ENCODE measurements at regions of chr17 and their contacts with region 1.

Region 1: GRCh38 chr17:66549731-66550207 is 247.4 kb downstream of the PRKCA start:
- DNase-seq: no peak
- H3K4me3 Mint-ChIP-seq: no peak overlapping the region
- H3K27ac Mint-ChIP-seq: no peak overlapping the region
- H3K4me1 Mint-ChIP-seq: peaks cover 42% of the 10 kb centered on the region
- H3K27me3 Mint-ChIP-seq: no peaks in the 10 kb centered on the region

Region 2: GRCh38 chr17:66191593-66192382 is 358.0 kb before region 1 on chr17 and contains the start of gene CEP112:
- intact Hi-C with region 1: loop called (anchors 5 kb)
- DNase-seq: peak; percentile 81
- H3K4me3 Mint-ChIP-seq: peak within 1 kb of the TSS; percentile 80
- H3K27ac Mint-ChIP-seq: peak within 1 kb of the TSS; percentile 70
- H3K4me1 Mint-ChIP-seq: peaks cover 15% of the 10 kb centered on the region
- H3K27me3 Mint-ChIP-seq: peaks cover 6% of the 10 kb centered on the region
- total RNA-seq, gene CEP112: 1.3 and 1.7 TPM in 2 replicates

Region 3: DNA sequence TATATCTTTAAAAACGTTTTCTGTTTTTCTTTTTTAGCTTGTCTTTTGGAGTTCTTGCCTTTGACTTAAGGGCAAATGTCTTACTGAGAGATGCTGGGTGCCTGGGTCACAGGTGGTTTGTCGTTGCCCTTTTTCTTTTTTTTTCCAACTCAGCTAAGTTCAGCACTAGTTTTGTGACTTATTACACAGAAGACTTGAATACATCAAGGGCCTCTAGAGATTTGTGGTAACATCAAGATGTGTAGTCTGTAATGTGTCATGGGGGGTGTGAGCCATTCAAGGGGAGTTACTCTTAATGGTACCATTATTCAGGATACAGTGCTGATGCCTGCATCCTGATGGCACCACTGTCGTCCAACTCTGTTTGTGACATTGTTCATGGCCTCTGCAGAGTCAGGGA is 152.3 kb before region 1 on chr17:
- intact Hi-C with region 1: loop called (anchors 1 kb)
- DNase-seq: no peak
- H3K4me3 Mint-ChIP-seq: no peak overlapping the region
- H3K27ac Mint-ChIP-seq: peak overlapping the region; percentile 69
- H3K4me1 Mint-ChIP-seq: peaks cover 80% of the 10 kb centered on the region
- H3K27me3 Mint-ChIP-seq: no peaks in the 10 kb centered on the region

Region 4: DNA sequence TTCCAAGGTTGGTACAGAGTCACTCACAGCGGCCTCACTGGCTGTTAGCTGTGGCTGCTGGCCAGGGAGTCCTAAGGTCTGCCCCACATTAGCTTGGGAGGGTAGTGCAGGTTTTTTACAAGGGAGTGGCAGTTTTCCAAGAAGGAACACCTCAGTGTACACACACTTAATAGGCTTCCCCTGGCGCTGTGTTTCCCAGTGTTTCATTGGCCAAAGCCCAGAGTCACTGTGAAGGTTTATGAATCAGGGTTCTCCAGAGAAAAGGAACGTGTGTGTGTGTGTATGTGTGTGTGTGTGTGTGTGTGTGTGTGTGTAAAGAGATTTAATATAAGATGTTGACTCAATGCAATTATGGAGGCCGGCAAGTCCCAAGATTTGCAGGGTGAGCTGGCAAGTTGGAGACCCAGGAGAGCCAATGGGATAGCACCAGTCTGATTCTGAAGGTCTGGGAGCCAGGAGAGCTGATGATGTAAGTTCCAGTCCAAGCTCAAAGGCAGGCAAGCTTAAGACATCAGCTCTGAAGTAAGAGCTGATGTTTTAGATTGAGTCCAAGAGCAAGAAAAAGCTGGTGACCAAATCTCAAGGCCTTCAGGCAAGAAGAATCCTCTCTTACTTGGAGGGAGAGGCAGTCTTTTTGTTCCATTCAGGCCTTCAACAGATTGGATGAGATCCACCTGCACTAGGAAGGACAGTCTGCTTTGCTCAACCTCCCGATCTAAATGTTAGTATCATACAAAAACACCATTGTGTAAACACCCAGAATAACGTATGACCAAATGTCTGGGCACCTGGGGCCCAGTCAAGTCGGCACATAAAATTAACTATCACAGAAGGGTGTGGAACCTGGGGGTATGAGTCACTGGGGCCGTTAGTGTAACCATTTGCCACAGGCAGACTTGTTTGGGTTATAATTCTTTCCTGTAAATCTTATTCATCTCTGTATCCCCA is 40.6 kb before region 1 on chr17:
- intact Hi-C with region 1: loop called (anchors 1 kb)
- DNase-seq: peak; percentile 29
- H3K4me3 Mint-ChIP-seq: peak overlapping the region; percentile 77
- H3K27ac Mint-ChIP-seq: peak overlapping the region; percentile 97
- H3K4me1 Mint-ChIP-seq: peaks cover 82% of the 10 kb centered on the region
- H3K27me3 Mint-ChIP-seq: no peaks in the 10 kb centered on the region

Region 5: DNA sequence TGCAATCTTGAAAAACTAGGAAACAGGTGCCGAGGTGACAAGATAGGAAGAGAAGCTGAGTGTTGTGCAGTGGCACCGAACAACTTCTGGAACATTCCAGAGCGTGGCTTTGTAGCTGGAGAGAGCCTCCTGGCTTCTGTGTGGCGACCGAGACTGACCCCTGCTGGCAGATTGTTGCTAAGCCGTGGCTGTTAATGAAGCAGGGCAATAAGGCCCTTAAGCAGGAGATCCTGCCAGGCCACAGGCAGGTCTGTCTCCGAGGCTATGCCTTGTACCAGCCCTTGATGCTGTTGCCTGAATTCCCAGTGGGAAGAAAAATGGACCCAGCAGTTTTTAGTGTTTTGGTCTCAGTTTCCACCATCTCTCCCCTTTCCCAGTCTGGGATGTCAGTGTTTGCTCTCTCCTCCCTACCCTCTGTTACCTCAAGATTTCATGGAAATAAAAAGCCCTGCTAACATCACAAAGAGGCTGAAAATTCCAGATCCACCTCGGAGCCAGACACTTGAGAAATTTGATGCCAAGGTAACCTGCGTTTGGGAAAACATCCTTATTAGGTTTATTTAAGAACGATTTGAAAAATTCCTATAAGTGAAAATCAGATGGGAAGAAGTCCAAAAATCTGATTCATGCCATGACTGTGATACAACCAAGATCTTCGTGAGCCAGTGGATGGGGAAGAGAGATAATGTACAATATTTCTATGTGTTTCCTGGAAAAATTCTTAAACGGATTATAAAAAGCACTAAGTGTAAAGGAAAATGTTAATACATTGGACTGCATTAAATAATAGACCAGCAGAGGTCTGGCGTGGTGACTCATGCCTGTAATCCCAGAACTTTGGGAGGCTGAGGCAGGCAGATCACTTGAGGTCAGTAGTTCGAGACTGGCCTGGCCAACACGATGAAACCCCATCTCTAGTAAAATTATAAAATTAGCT is 17.7 kb after region 1 on chr17:
- intact Hi-C with region 1: loop called (anchors 2 kb)
- DNase-seq: peak; percentile 63
- H3K4me3 Mint-ChIP-seq: no peak overlapping the region
- H3K27ac Mint-ChIP-seq: peak overlapping the region; percentile 25
- H3K4me1 Mint-ChIP-seq: peaks cover 37% of the 10 kb centered on the region
- H3K27me3 Mint-ChIP-seq: no peaks in the 10 kb centered on the region

Region 6: GRCh38 chr17:66717641-66718058 is 167.9 kb after region 1 on chr17:
- intact Hi-C with region 1: no loop called
- DNase-seq: no peak
- H3K4me3 Mint-ChIP-seq: no peak overlapping the region
- H3K27ac Mint-ChIP-seq: no peak overlapping the region
- H3K4me1 Mint-ChIP-seq: peaks cover 38% of the 10 kb centered on the region
- H3K27me3 Mint-ChIP-seq: no peaks in the 10 kb centered on the region

Measured in activated T-helper 1 cell treated with anti-CD3 and anti-CD28 coated beads, Interleukin-12 subunit alpha, Interleukin-12 subunit beta, Interleukin-2, Interleukin-4 antibody, amounts not matched to agents 30 ng/mL and 10 ng/mL and 1 ng/mL, durations not matched to agents 14 hours and 24 hours and 36 hours (primary cell).